PC-9 (cell line): ENCODE measurements at regions of chr11 and their contacts with region 1.

Region 1: DNA sequence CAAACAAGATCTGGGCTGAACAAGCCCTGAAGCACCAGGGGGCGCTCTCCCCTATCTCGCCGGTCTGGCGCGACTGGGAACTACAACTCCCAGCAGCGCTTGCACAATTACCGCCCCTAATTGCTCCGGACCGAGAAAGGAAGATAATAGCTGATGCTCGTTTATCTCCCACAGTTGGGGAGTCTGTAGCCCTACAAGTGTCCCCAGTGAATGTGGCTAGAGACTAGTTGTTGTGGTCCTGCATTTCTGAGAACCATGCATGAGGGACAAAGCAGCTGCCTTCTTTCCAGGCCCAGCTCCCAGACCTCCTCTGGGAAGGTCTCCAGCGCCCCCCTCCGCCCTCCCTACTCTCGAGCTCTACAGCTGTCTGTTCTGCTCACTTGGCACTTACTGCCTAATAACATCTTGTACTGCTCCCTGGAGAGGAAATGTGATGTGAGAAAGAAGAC is 34.4 kb downstream of the NRXN2 start:
- DNase-seq: peak; percentile 60 to 89
- H3K4me3 ChIP-seq: peak overlapping the region; percentile 45; the same call in 1 of the 2 replicates
- H3K27ac ChIP-seq: no peak overlapping the region
- H3K4me1 ChIP-seq: no peaks in the 10 kb centered on the region
- H3K27me3 ChIP-seq: peaks cover 54% of the 10 kb centered on the region
- CTCF ChIP-seq: peak; percentile 94

Region 2: GRCh38 chr11:64448599-64449556 is 239.7 kb before region 1 on chr11:
- CTCF ChIA-PET with region 1: interaction called, 8 read pairs
- POLR2A ChIA-PET with region 1: no interaction called
- intact Hi-C with region 1: loop called (anchors 1 kb)
- DNase-seq: peak; percentile 60 to 89
- H3K4me3 ChIP-seq: peak overlapping the region; percentile 40; the same call in 1 of the 2 replicates
- H3K27ac ChIP-seq: no peak overlapping the region
- H3K4me1 ChIP-seq: peaks cover 16% of the 10 kb centered on the region
- H3K27me3 ChIP-seq: peaks cover 30% of the 10 kb centered on the region
- CTCF ChIP-seq: peak; percentile 92

Region 3: DNA sequence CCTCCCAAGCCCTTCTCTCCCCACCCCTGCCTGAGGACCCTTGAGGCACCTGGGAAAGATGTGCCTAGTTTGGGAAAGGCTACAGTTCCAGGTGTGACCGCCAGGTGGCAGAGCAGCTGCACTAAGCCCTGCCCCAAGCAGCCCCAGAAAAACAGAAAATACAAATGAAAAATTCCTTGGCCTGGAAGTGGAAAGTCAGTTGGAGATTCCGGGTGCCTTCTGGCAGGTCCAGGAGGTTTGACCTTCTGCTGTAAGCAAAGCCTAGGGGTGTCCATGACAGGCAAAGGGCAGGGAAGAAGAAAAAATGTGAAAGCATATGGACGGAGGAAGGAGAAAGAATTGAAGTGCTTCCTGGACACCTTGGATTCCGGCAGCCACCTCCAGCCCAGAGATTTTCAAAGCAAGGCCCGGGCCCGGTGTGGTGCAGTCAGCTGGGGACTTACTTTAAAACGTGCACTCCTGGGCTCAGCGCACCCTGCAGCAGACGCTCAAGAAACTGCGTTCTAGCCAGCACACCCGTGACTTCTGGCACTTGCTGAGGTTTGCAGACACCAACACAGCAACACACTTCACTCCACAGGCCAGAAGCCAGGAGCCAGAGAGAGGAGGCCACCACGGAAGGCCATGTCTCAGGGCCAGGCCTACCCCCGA is 134.9 kb before region 1 on chr11:
- CTCF ChIA-PET with region 1: no interaction called
- POLR2A ChIA-PET with region 1: no interaction called
- intact Hi-C with region 1: loop called (anchors 1 kb)
- DNase-seq: peak in 1 of 2 experiments; percentile 58
- H3K4me3 ChIP-seq: no peak overlapping the region
- H3K27ac ChIP-seq: no peak overlapping the region
- H3K4me1 ChIP-seq: peaks cover 10% of the 10 kb centered on the region; the same call in 1 of the 2 replicates
- H3K27me3 ChIP-seq: no peaks in the 10 kb centered on the region
- CTCF ChIP-seq: peak; percentile 100

Region 4: GRCh38 chr11:64659417-64660144 is 29.0 kb before region 1 on chr11:
- CTCF ChIA-PET with region 1: interaction called, 10 read pairs
- POLR2A ChIA-PET with region 1: no interaction called
- intact Hi-C with region 1: no loop called
- DNase-seq: peak; percentile 60 to 79
- H3K4me3 ChIP-seq: no peak overlapping the region
- H3K27ac ChIP-seq: peak overlapping the region; percentile 65
- H3K4me1 ChIP-seq: peaks cover 38% of the 10 kb centered on the region
- H3K27me3 ChIP-seq: no peaks in the 10 kb centered on the region
- CTCF ChIP-seq: no peak

Region 5: GRCh38 chr11:64759561-64760349 is 71.2 kb after region 1 on chr11 and contains the start of gene PYGM:
- CTCF ChIA-PET with region 1: no interaction called
- POLR2A ChIA-PET with region 1: no interaction called
- intact Hi-C with region 1: no loop called
- DNase-seq: no peak
- H3K4me3 ChIP-seq: no peak within 1 kb of the TSS
- H3K27ac ChIP-seq: no peak within 1 kb of the TSS
- H3K4me1 ChIP-seq: no peaks in the 10 kb centered on the region
- H3K27me3 ChIP-seq: no peaks in the 10 kb centered on the region
- CTCF ChIP-seq: no peak
- total RNA-seq, gene PYGM: 1.3 and 1.6 TPM in 2 replicates

Region 6: DNA sequence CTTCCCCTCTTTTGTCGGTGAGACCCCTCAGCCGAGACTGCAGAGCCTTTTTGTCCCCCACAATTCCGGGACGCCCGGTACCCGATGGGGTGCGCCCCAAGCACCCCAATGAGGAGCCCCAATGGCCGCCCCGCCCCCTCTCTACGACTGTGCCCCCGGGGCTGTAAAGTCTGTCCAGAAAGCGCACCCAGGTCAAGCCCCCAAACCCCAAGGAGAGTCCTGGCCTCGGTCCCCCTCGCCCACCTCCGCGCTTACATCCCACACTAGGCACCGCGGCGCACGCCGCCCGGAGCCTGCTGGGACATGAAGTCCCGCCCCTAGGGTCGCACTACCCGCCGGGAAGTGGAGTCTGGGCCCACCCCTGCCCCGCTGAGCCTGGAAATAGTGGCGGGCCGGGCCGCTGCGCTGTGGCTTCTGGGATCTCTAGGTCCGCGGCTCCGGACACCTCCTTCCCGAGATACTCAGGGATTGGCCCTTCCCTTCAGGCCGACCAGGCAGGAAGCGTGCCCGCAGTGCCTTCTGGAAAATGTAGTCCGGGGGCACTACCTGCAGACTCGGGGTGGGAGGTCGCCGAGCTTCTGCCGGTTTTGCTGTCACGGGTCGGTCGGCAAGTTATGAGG is 121.8 kb after region 1 on chr11 and contains the start of gene MEN1:
- CTCF ChIA-PET with region 1: interaction called, 10 read pairs
- POLR2A ChIA-PET with region 1: no interaction called
- intact Hi-C with region 1: no loop called
- DNase-seq: peak; percentile 91 to 98
- H3K4me3 ChIP-seq: peak within 1 kb of the TSS; percentile 93
- H3K27ac ChIP-seq: no peak within 1 kb of the TSS
- H3K4me1 ChIP-seq: peaks cover 6% of the 10 kb centered on the region; the same call in 1 of the 2 replicates
- H3K27me3 ChIP-seq: no peaks in the 10 kb centered on the region
- CTCF ChIP-seq: no peak
- total RNA-seq, gene MEN1: 48.7 and 61.6 TPM in 2 replicates

Region 7: GRCh38 chr11:64960719-64961118 is 272.2 kb after region 1 on chr11:
- CTCF ChIA-PET with region 1: interaction called, 13 read pairs
- POLR2A ChIA-PET with region 1: no interaction called
- intact Hi-C with region 1: no loop called
- DNase-seq: no peak
- H3K4me3 ChIP-seq: no peak overlapping the region
- H3K27ac ChIP-seq: no peak overlapping the region
- H3K4me1 ChIP-seq: no peaks in the 10 kb centered on the region
- H3K27me3 ChIP-seq: no peaks in the 10 kb centered on the region
- CTCF ChIP-seq: no peak

Region 8: GRCh38 chr11:65060913-65061408 is 372.4 kb after region 1 on chr11:
- CTCF ChIA-PET with region 1: interaction called, 19 read pairs
- POLR2A ChIA-PET with region 1: no interaction called
- intact Hi-C with region 1: no loop called
- DNase-seq: no peak
- H3K4me3 ChIP-seq: no peak overlapping the region
- H3K27ac ChIP-seq: no peak overlapping the region
- H3K4me1 ChIP-seq: no peaks in the 10 kb centered on the region
- H3K27me3 ChIP-seq: no peaks in the 10 kb centered on the region
- CTCF ChIP-seq: no peak